ENCODE measurements at regions of chr3 and their contacts with region 1.

Region 1: DNA sequence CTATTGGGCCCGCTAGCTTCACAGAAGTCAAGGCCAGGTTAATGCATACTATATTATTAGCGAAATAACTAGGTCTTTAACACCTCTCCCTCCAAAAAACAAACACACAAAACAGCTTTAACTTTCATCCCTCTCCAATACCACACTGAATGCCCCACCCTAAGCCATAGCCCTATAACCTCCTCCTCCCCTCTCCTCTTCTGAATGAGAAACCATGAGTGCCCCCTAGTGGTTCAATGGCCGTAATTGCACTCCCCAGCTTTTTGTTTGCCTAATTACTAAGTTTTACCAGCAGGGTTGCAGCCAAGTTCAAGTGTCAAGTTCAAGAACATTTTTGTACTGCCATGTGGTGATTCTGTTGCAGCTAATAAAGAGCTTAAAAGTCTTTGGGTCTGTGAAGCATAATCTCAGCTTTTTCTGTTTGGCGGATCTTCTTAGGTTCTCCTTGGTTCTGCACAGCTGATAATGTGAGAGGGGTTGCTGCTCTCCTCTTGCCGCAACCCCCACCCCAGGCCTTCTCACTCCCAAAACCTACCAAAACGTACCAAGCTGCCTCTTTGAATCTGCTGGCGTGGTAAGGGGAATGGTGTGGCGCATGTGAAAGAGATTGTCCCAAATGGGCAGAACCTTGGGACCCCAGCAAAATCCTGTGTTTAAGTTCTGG is 57.9 kb downstream of the RPL22L1 start:
- DNase-seq: no peak
- H3K4me3 ChIP-seq: no peak overlapping the region
- H3K27ac ChIP-seq: no peak overlapping the region
- H3K4me1 ChIP-seq: peaks cover 0 to 13% (median 4%) of the 10 kb centered on the region in 4 donors
- H3K27me3 ChIP-seq: no peaks in the 10 kb centered on the region
- CTCF ChIP-seq: peak; percentile 82 to 91 (median 84)
- EP300 ChIP-seq: no peak
- POLR2A ChIP-seq: no peak

Region 2: DNA sequence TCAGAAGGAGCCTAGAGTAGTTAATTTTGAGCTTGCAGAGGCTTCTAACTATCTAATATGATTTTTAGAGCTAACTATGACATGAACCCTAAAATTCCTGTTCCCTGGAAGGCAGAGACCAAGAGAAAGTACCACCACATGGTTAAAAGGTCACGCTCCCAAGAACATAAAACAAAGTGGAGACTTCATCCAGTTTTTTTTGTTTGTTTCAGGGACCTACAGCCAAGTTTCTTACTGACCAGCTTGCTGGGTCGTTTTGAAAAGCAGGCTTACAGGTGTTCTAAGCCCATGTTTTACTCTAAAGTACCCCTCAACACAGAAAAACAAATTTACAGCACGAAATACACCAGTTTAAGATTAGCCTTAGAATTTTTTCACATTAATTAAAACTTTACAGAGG is 494.1 kb before region 1 on chr3:
- intact Hi-C with region 1: loop called (anchors 10 kb)
- DNase-seq: no peak
- H3K4me3 ChIP-seq: no peak overlapping the region
- H3K27ac ChIP-seq: no peak overlapping the region
- H3K4me1 ChIP-seq: no peaks in the 10 kb centered on the region
- H3K27me3 ChIP-seq: no peaks in the 10 kb centered on the region
- CTCF ChIP-seq: no peak
- EP300 ChIP-seq: no peak
- POLR2A ChIP-seq: no peak

Region 3: GRCh38 chr3:170414202-170414663 is 397.8 kb before region 1 on chr3:
- intact Hi-C with region 1: loop called (anchors 2 kb)
- DNase-seq: no peak
- H3K4me3 ChIP-seq: no peak overlapping the region
- H3K27ac ChIP-seq: no peak overlapping the region
- H3K4me1 ChIP-seq: peaks cover 12 to 14% (median 13%) of the 10 kb centered on the region in 4 donors
- H3K27me3 ChIP-seq: peaks cover 0 to 38% (median 7%) of the 10 kb centered on the region in 4 donors
- CTCF ChIP-seq: peak; percentile 78 to 95 (median 86)
- EP300 ChIP-seq: no peak
- POLR2A ChIP-seq: no peak

Region 4: GRCh38 chr3:170862618-170863374 is 50.7 kb after region 1 on chr3:
- intact Hi-C with region 1: no loop called
- DNase-seq: no peak
- H3K4me3 ChIP-seq: no peak overlapping the region
- H3K27ac ChIP-seq: no peak overlapping the region
- H3K4me1 ChIP-seq: peaks cover 3 to 12% (median 10%) of the 10 kb centered on the region in 4 donors
- H3K27me3 ChIP-seq: no peaks in the 10 kb centered on the region
- CTCF ChIP-seq: no peak
- EP300 ChIP-seq: no peak
- POLR2A ChIP-seq: no peak

Measured in esophagus muscularis mucosa (tissue), 4 donors.